Psoas muscle (tissue), 8 donors: ENCODE measurements at regions of chr1 and their contacts with region 1.

Region 1: DNA sequence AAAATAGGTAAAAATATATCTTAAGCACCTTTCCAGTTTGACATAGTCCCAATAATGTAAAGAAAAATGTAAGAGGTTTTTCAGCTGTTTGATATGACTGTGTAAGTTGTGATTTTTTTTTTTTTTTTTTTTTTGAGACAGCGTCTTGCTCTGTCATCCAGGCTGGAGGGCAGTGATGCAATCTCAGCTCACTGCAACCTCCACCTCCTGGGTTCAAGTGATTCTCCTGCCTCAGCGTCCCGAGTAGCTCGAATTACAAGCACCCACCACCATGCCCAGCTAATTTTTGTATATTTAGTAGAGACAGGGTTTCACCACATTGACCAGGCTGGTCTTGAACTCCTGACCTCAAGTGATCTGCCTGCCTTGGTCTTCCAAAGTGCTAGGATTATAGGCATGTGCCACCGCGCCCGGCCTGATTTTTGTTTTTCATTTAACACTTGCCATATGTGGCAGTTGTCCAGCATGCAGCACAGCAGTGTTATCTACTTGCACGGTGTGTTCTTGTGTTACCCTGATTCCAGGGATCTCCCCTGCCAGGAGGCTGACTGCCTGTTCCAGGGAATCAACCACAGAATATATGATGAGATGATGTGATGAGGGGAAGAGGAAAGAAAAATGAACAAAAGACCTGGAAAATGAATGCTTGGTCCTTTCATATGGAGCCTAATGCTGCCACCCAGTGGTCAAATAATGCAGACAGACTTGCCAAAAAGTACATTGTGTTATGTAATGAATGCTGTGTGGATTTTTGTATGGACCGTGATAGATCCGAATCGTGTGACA is 79.0 kb downstream of the RAVER2 start:
- DNase-seq: no peak
- ATAC-seq: peak; percentile 49 to 89 (median 74)
- H3K4me3 ChIP-seq: no peak overlapping the region
- H3K27ac ChIP-seq: no peak overlapping the region
- H3K4me1 ChIP-seq: no peaks in the 10 kb centered on the region
- H3K27me3 ChIP-seq: no peaks in the 10 kb centered on the region
- CTCF ChIP-seq: peak; percentile 87

Region 2: GRCh38 chr1:64268653-64269557 is 555.0 kb before region 1 on chr1:
- intact Hi-C with region 1: loop called (anchors 1 to 5 kb)
- DNase-seq: peak; percentile 45 to 50
- ATAC-seq: peak; percentile 80 to 92 (median 81)
- H3K4me3 ChIP-seq: no peak overlapping the region
- H3K27ac ChIP-seq: no peak overlapping the region
- H3K4me1 ChIP-seq: no peaks in the 10 kb centered on the region
- H3K27me3 ChIP-seq: no peaks in the 10 kb centered on the region
- CTCF ChIP-seq: peak; percentile 84

Region 3: GRCh38 chr1:64744492-64745180 is 79.2 kb before region 1 on chr1 and contains the start of gene RAVER2:
- intact Hi-C with region 1: loop called (anchors 2 to 5 kb)
- DNase-seq: peak; percentile 77 to 82
- ATAC-seq: peak; percentile 77 to 81 (median 80)
- H3K4me3 ChIP-seq: peak within 1 kb of the TSS; percentile 94
- H3K27ac ChIP-seq: peak within 1 kb of the TSS; percentile 83
- H3K4me1 ChIP-seq: peaks cover 25% of the 10 kb centered on the region
- H3K27me3 ChIP-seq: no peaks in the 10 kb centered on the region
- CTCF ChIP-seq: peak; percentile 32
- total RNA-seq, gene RAVER2: 6.7 to 12.3 (median 10.2) TPM

Region 4: DNA sequence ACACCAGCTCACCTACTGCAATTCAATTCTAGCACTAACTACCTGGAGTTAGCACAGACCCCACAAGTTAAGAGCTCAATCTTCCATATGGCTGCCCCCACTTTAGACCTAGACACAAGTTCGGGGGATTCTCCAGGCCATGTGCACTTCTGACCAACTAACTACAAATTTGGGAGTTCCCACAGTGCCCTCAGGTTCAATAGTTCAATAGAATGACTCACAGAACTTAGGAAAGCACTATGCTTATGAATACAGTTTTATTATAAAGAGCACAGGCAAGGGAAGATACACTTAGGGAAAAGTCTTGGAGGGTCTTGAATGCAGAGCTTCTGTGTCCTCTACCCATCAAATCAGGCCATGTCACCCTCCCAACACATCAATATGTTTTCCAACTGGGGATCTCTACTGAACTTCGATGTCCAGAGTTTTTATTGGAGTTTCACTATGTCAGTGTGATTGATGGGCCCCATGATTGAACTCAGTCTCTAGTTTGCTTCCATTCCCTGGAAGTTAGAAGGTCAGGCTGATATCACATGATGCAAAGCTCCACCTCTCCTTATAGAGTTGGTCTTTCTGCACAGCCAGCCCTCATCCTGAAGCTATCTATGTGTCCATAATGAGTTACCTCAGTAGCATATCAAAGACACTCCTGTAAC is 32.9 kb before region 1 on chr1:
- intact Hi-C with region 1: no loop called
- DNase-seq: no peak
- ATAC-seq: no peak
- H3K4me3 ChIP-seq: no peak overlapping the region
- H3K27ac ChIP-seq: no peak overlapping the region
- H3K4me1 ChIP-seq: no peaks in the 10 kb centered on the region
- H3K27me3 ChIP-seq: no peaks in the 10 kb centered on the region
- CTCF ChIP-seq: no peak